ENCODE measurements at regions of chr20 and their contacts with region 1.

Region 1: DNA sequence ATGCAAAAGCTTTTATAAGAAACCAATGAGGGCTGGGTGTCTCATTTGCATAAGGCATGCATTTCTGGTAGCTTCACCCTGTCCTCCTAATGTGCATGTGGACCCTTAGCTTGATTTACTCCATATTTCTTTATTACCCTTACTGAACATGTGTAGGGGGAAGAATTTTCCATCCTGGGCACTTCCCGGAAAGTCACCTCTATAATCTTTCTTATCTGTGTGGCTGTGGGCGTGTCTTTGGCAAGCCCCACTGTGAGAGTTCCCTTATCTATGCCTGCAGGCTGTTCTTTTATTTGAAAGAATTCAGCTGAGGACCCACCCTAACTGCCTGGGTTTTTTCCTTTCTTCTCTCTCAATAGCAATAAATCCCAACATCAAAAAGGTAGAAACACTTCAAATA is 627.8 kb downstream of the DOK5 start:
- DNase-seq: no peak
- ATAC-seq: no peak
- H3K4me3 ChIP-seq: no peak overlapping the region
- H3K27ac ChIP-seq: no peak overlapping the region
- H3K4me1 ChIP-seq: no peaks in the 10 kb centered on the region
- H3K27me3 ChIP-seq: no peaks in the 10 kb centered on the region
- CTCF ChIP-seq: no peak
- POLR2A ChIP-seq: no peak

Region 2: GRCh38 chr20:55054453-55054852 is 48.7 kb before region 1 on chr20:
- intact Hi-C with region 1: loop called in 1 of 10 experiments (anchors 10 kb)
- DNase-seq: no peak
- ATAC-seq: no peak
- H3K4me3 ChIP-seq: no peak overlapping the region
- H3K27ac ChIP-seq: no peak overlapping the region
- H3K4me1 ChIP-seq: no peaks in the 10 kb centered on the region
- H3K27me3 ChIP-seq: no peaks in the 10 kb centered on the region
- CTCF ChIP-seq: no peak
- POLR2A ChIP-seq: no peak